ENCODE measurements at regions of chr7 and their contacts with region 1.

Region 1: DNA sequence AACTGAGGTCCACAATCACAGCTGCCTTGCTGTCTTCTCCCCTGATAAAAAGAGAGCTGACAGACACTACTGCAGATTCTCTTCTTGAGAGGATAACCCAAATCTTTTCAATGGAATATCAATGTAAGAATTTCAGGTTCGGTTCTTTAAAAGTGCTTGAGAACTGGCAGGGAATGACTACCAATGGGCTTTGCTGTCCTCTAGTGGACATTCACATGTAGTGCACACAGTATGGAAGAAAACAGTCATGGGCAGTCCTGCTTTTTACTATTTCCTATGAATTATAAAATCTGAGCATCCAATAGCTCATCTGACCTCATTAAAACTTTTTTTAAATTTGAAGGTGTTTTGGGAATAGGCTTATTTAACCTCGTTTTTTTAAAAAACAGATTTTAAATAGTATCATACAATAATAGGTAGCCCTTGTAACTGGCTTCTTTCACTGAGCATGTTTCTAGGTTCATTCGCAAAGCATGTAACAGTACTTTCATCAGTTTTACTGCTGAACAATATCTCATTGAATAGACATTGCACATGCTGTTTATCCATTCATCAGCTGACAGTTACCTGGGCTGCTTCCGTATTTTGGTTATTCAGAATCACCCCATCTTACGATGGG is 18.3 kb downstream of the FZD9 start:
- DNase-seq: no peak
- H3K4me3 ChIP-seq: no peak overlapping the region
- H3K27ac ChIP-seq: no peak overlapping the region
- H3K4me1 ChIP-seq: no peaks in the 10 kb centered on the region
- H3K27me3 ChIP-seq: no peaks in the 10 kb centered on the region
- CTCF ChIP-seq: peak in 2 of 3 experiments; percentile 82 to 90; a peak in 3 of 4 replicates
- EP300 ChIP-seq: no peak
- POLR2A ChIP-seq: no peak
- RAD21 ChIP-seq: peak; percentile 93 to 95

Region 2: DNA sequence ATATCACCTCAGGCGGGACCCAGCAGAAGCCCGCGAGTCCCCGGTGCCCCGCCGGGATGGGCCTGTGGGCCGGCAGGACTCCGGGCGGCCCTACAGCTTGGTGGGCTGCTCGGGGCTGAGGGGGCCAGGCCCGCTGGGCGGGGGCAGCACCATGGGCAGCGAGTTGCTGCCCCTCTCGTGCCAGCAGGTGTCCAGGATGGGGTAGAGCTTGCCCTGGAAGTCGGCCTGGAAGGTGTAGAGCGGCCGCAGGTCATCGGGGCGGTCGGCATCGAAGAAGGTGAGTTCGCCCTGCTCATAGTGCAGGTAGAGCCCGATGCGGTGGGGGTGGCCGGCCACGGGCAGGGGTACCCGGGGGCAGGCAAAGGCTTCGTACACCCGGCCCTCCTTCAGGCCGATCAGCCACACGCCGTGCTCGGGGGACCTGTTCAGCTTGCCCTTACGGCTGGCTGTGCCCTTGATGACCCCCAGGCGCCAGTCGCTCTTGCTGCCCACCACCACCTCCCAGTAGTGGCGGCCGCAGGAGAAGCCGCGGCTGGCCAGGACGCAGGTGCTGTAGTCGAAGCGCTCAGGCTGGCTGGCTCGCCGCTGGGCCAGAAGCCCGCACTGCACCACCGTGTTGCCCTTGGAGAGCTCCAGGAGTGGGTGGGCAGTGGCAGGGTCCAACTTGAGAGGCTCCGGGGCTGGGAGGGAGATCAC is 138.9 kb before region 1 on chr7:
- CTCF ChIA-PET with region 1: interaction called, 12 read pairs
- POLR2A ChIA-PET with region 1: no interaction called
- DNase-seq: no peak
- H3K4me3 ChIP-seq: no peak overlapping the region
- H3K27ac ChIP-seq: no peak overlapping the region
- H3K4me1 ChIP-seq: no peaks in the 10 kb centered on the region
- H3K27me3 ChIP-seq: peaks cover 0 to 2% (median 0%) of the 10 kb centered on the region in 4 experiments; a peak in 1 of 7 replicates
- CTCF ChIP-seq: no peak
- EP300 ChIP-seq: no peak
- POLR2A ChIP-seq: no peak
- RAD21 ChIP-seq: no peak

Region 3: DNA sequence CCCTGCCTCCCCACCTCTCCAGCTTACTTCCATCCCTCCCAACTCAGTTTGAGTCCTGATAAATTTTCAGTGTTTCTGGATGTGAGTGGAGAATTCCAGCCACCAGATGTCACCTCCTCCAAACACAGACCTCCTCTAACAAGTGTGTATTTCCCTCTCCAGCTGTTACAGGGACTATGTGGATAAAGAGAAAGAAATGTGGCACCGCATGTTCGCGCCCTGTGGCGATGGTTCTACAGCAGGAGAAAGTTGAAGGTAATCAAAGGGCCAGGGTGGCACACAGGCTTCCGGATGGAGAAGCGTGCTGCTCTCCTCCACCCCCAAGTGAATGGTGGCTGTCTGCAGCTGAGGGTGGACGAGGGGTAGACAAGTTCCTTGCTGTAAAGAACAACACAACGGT is 109.2 kb before region 1 on chr7:
- CTCF ChIA-PET with region 1: interaction called, 12 read pairs
- POLR2A ChIA-PET with region 1: no interaction called
- DNase-seq: no peak
- H3K4me3 ChIP-seq: no peak overlapping the region
- H3K27ac ChIP-seq: no peak overlapping the region
- H3K4me1 ChIP-seq: peaks cover 0 to 17% (median 4%) of the 10 kb centered on the region in 4 experiments; a peak in 5 of 7 replicates
- H3K27me3 ChIP-seq: no peaks in the 10 kb centered on the region; a peak in 1 of 7 replicates
- CTCF ChIP-seq: peak in 2 of 3 experiments; percentile 48 to 59; a peak in 3 of 4 replicates
- EP300 ChIP-seq: no peak
- POLR2A ChIP-seq: no peak
- RAD21 ChIP-seq: peak; percentile 42 to 63

Region 4: DNA sequence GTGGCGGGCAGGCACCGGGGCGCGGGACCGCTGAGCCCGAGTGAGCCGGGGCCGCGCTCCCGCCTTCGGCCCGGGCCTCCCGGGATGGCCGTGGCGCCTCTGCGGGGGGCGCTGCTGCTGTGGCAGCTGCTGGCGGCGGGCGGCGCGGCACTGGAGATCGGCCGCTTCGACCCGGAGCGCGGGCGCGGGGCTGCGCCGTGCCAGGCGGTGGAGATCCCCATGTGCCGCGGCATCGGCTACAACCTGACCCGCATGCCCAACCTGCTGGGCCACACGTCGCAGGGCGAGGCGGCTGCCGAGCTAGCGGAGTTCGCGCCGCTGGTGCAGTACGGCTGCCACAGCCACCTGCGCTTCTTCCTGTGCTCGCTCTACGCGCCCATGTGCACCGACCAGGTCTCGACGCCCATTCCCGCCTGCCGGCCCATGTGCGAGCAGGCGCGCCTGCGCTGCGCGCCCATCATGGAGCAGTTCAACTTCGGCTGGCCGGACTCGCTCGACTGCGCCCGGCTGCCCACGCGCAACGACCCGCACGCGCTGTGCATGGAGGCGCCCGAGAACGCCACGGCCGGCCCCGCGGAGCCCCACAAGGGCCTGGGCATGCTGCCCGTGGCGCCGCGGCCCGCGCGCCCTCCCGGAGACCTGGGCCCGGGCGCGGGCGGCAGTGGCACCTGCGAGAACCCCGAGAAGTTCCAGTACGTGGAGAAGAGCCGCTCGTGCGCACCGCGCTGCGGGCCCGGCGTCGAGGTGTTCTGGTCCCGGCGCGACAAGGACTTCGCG is 17.8 kb before region 1 on chr7:
- CTCF ChIA-PET with region 1: interaction called, 24 read pairs
- POLR2A ChIA-PET with region 1: no interaction called
- DNase-seq: peak; percentile 36 to 76
- H3K4me3 ChIP-seq: peak overlapping the region in 3 of 4 experiments; percentile 39 to 61 (median 44); a peak in 6 of 8 replicates
- H3K27ac ChIP-seq: no peak overlapping the region
- H3K4me1 ChIP-seq: peaks cover 0 to 10% (median 5%) of the 10 kb centered on the region in 4 experiments; a peak in 6 of 7 replicates
- H3K27me3 ChIP-seq: peaks cover 9 to 20% (median 18%) of the 10 kb centered on the region in 4 experiments
- CTCF ChIP-seq: no peak
- EP300 ChIP-seq: no peak
- POLR2A ChIP-seq: no peak
- RAD21 ChIP-seq: no peak

Region 5: DNA sequence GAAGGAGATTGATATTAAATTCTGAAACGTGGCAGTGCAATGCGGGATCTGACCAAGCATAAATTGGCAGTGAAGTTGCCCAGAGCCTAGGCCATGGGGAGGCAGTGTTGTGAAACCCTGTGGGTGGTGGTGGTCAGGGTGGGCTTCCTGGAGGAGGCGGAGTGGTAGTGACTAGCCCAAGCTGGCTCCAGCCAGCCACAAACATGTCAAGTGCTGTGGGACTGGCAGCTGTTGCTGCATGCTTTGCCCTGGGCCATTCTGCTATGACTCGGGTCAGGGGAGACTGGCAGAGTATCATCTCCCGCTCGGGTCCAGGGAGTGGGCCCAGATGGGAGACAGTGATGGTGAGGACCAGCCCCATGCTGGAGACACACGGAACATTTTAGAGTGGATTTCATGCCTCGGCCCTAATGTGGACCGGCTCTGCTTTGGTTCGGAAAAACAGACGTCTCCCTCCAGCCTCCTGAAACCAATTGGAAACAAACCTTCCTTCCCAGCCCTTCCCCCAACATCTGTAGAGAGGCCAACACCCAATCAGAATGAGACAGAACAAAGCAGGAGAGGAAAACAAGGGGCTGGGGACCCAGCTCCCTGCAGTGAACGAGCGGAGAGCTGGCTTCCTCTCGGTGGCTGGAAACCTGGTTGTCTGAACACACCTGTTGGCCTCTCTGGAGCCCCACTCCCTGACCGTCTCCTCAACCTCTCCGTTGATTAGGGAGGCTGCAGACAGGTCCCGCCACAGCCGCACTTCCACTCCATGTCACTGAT is 467.2 kb after region 1 on chr7:
- CTCF ChIA-PET with region 1: no interaction called
- POLR2A ChIA-PET with region 1: no interaction called
- DNase-seq: peak in 1 of 2 experiments; percentile 70
- H3K4me3 ChIP-seq: peak overlapping the region in 3 of 4 experiments; percentile 7 to 46 (median 32); a peak in 5 of 8 replicates
- H3K27ac ChIP-seq: peak overlapping the region; percentile 73; the same call in 1 of the 2 replicates
- H3K4me1 ChIP-seq: peaks cover 3 to 12% (median 11%) of the 10 kb centered on the region in 4 experiments
- H3K27me3 ChIP-seq: no peaks in the 10 kb centered on the region
- CTCF ChIP-seq: peak; percentile 26 to 41 (median 38)
- EP300 ChIP-seq: 0 out of 3 replicates have a peak, but pooled peaks of 1 of the 2 experiments have one; percentile 23
- POLR2A ChIP-seq: peak in 1 of 2 experiments; percentile 77; a peak in 2 of 3 replicates
- RAD21 ChIP-seq: peak; percentile 23 to 45; a peak in 3 of 4 replicates

Measured in H1 (cell line).